ENCODE measurements at regions of chr19 and their contacts with region 1.

Region 1: DNA sequence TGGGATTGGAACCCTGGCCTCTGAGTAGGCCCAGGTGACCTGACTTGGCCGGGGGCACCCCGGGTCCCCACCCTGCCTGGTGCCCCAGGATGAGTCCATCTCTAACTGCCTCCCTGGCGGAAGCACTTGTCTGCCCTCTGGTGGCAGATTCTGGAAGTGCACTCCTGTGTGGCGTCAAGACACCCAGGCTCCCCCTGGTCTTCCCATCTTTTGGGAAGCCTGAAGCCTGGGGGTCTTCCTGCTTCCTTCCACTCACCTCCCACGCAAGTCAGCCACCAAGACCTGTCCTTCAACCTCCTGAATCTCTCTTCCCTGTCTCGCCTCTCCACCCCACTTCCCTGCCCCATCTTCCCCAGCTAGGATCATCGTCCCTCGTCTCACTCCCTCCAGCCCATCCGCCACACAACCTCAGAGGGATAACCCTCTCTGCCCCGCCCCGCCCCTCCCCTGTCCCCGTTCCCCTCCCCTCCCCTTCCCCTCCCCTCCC is 7.4 kb downstream of the RABAC1 start:
- DNase-seq: peak; percentile 87
- H3K4me3 ChIP-seq: no peak overlapping the region
- H3K27ac ChIP-seq: no peak overlapping the region
- H3K4me1 ChIP-seq: peaks cover 52% of the 10 kb centered on the region
- CTCF ChIP-seq: peak; percentile 98

Region 2: DNA sequence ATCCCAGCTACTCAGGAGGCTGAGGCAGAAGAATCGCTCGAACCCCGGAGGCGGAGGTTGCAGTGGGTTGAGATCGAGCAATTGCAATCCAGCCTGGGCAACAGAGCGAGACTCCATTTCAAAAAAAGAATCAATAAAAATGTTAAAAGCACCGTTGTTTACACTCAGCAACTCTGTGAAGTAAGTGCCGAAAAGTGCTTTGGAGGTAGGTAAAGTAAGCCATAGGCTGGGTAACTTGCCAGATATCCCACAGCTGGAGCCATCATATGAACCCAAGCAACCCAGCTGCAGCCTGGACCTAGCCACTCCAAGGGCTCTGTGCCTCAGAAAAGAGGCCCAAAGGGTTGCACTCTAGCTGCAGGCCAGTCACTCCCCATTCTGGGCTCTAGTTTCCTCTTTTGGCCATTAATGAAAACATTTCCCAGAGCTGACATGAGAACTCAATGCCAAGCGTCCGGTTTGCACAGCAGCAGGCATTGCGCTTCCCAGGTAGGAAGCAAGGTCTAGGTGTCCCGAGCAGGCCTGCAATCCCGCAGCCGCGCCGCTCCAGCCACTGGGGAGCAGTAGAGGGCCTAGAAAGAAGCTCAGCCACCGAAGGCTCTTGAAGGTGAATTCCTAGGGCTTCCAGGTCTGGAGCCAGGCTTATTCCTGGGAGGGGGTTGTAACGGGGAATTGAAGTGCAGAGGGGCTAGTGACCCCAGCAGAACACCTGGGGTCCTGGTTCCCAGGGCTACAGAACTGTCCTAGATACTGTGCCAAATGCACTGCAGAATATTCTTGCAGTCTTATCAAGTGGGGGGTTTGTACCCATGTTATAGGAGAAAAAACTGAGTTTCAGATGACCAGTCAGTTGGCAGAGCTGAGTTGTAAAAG is 78.7 kb before region 1 on chr19:
- CTCF ChIA-PET with region 1: interaction called, 6 read pairs
- POLR2A ChIA-PET with region 1: interaction called, 9 read pairs
- intact Hi-C with region 1: loop called (anchors 1 kb)
- DNase-seq: peak; percentile 77
- H3K4me3 ChIP-seq: no peak overlapping the region
- H3K27ac ChIP-seq: peak overlapping the region; percentile 100
- H3K4me1 ChIP-seq: peaks cover 88% of the 10 kb centered on the region
- CTCF ChIP-seq: peak; percentile 94

Region 3: GRCh38 chr19:41934849-41935374 is 16.8 kb before region 1 on chr19:
- CTCF ChIA-PET with region 1: interaction called, 5 read pairs
- POLR2A ChIA-PET with region 1: interaction called, 21 read pairs
- intact Hi-C with region 1: loop called (anchors 2 kb)
- DNase-seq: peak; percentile 85
- H3K4me3 ChIP-seq: no peak overlapping the region
- H3K27ac ChIP-seq: peak overlapping the region; percentile 62
- H3K4me1 ChIP-seq: peaks cover 87% of the 10 kb centered on the region
- CTCF ChIP-seq: peak; percentile 97

Region 4: GRCh38 chr19:42092350-42092749 is 140.6 kb after region 1 on chr19:
- CTCF ChIA-PET with region 1: no interaction called
- POLR2A ChIA-PET with region 1: no interaction called
- intact Hi-C with region 1: no loop called
- DNase-seq: peak; percentile 46
- H3K4me3 ChIP-seq: no peak overlapping the region
- H3K27ac ChIP-seq: no peak overlapping the region
- H3K4me1 ChIP-seq: peaks cover 31% of the 10 kb centered on the region
- CTCF ChIP-seq: peak; percentile 77